GM13976 (cell line): ENCODE measurements at regions of chr6 and their contacts with region 1.

Region 1: DNA sequence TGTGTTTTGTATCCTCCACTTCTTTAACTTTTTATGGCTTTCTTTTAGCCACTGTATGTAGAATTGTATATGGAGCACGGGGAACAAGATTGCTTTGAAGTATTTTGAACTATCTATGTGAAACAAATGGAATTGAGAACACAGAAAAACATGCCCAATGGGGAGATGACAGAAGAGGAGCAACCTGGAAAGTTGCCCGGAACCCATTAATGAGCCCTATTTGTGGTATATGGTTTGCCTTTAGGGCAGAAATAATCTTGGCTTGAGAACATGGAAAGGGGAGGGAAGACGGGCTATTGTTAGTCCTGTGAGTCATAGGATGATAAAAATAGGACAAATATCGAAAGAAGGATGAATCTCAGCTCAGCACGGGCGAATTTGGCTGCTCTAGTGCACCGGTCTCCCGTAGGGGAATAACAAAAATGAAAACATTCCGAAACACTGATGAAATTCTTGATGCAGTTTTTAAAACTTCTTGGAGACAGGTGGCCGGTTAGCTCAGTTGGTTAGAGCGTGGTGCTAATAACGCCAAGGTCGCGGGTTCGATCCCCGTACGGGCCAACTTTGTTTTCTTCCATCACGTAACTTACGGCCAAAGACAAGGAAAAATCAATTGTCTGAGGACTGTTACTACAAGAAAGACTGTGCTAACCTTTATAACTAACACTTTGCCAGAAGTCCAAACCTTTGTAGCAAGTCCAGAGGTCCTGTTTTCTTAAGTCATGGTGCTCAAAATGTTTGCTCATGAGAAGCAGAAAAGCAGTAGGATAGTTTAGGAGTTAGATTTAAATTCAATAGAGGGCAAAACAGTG is 15.7 kb downstream of the HMGN4 start:
- DNase-seq: no peak
- CTCF ChIP-seq: no peak

Region 2: DNA sequence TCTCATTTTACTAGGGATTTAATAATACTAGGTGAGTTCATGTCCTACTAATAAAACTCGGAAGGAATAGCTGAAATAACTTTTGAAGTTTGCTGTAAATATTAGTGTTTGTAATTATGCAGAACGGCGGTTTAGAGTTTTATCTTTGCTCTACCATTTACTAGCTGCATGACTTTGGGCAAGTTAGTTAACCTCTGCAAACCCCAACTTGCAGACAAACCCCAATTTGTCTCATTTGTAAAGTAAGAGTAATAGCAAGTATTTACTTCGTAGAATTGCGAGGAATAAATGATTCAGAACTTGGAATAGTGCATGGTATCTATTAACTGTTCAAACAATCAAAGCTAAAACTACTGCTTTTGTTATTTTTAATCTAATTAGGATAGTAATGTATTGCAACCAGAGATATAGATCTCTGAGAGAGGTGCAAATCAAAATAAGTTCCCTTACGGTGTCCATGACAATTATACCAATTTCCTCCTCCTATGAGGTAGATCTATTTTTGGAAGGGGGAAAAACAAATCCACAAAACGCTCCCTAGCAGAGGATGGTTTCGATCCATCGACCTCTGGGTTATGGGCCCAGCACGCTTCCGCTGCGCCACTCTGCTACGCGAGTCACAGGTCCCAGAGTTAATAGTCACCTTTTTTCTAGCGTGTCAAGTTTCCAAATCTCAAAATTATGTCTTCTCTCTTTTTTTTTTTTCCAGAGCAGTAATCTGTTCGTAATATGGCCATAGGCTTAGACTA is 223.9 kb before region 1 on chr6:
- in situ Hi-C with region 1: loop called (anchors 10 kb)
- DNase-seq: no peak
- CTCF ChIP-seq: no peak

Region 3: GRCh38 chr6:26401987-26402658 is 151.7 kb before region 1 on chr6 and contains the start of gene BTN3A1:
- in situ Hi-C with region 1: no loop called
- DNase-seq: peak; percentile 54
- CTCF ChIP-seq: no peak